A549 (cell line): ENCODE measurements at regions of chr3 and their contacts with region 1.

Region 1: DNA sequence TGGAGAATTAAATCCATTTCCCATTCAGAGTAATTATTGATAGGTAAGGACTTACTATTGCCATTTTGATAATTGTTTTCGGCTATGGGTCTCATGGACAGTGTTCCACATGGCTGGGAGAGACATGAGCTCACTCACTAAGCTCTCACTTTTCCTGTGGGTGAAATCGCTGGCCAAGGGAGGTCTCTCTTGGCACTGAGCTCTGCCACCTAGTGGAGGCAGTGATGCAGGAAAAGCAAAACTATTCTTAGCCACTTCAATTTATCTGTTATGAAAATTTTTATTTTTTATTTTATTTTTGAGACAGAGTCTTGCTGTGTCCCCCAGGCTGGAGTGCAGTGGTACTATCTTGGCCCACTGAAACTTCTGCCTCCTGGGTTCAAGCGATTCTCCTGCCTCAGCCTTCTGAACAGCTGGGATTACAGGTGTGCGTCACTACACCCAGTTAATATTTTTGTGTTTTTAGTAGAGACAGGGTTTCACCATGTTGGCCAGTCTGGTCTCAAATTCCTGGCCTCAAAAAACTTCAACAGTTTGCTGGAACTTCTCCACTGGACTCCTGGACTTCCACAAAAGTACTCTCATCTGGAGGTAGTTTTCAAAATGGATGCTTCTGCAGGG is 4.7 kb upstream of the RNF13 start:
- DNase-seq: peak; percentile 60 to 79
- ATAC-seq: peak; percentile 15 to 31; a peak in 2 of 6 replicates
- H3K4me3 ChIP-seq: no peak overlapping the region
- H3K27ac ChIP-seq: peak overlapping the region in 1 of 2 experiments; percentile 54; a peak in 1 of 6 replicates
- H3K4me1 ChIP-seq: peaks cover 25% of the 10 kb centered on the region
- CTCF ChIP-seq: peak; percentile 93
- EP300 ChIP-seq: no peak
- POLR2A ChIP-seq: no peak
- RAD21 ChIP-seq: peak; percentile 77 to 79

Region 2: GRCh38 chr3:149494022-149494758 is 314.1 kb before region 1 on chr3:
- CTCF ChIA-PET with region 1: interaction called, 18 read pairs
- POLR2A ChIA-PET with region 1: no interaction called
- DNase-seq: peak; percentile 72 to 76
- ATAC-seq: peak; percentile 82 to 90; a peak in 5 of 6 replicates
- H3K4me3 ChIP-seq: no peak overlapping the region
- H3K27ac ChIP-seq: peak overlapping the region in 1 of 2 experiments; percentile 44; a peak in 1 of 6 replicates
- H3K4me1 ChIP-seq: peaks cover 6% of the 10 kb centered on the region; the same call in 2 of the 3 replicates
- CTCF ChIP-seq: peak; percentile 89
- EP300 ChIP-seq: no peak
- POLR2A ChIP-seq: no peak
- RAD21 ChIP-seq: peak; percentile 87 to 95

Region 3: GRCh38 chr3:149667576-149667975 is 140.7 kb before region 1 on chr3:
- CTCF ChIA-PET with region 1: no interaction called
- POLR2A ChIA-PET with region 1: no interaction called
- DNase-seq: no peak
- ATAC-seq: no peak
- H3K4me3 ChIP-seq: no peak overlapping the region
- H3K27ac ChIP-seq: no peak overlapping the region
- H3K4me1 ChIP-seq: peaks cover 12% of the 10 kb centered on the region
- CTCF ChIP-seq: no peak
- EP300 ChIP-seq: no peak
- POLR2A ChIP-seq: no peak
- RAD21 ChIP-seq: no peak

Region 4: DNA sequence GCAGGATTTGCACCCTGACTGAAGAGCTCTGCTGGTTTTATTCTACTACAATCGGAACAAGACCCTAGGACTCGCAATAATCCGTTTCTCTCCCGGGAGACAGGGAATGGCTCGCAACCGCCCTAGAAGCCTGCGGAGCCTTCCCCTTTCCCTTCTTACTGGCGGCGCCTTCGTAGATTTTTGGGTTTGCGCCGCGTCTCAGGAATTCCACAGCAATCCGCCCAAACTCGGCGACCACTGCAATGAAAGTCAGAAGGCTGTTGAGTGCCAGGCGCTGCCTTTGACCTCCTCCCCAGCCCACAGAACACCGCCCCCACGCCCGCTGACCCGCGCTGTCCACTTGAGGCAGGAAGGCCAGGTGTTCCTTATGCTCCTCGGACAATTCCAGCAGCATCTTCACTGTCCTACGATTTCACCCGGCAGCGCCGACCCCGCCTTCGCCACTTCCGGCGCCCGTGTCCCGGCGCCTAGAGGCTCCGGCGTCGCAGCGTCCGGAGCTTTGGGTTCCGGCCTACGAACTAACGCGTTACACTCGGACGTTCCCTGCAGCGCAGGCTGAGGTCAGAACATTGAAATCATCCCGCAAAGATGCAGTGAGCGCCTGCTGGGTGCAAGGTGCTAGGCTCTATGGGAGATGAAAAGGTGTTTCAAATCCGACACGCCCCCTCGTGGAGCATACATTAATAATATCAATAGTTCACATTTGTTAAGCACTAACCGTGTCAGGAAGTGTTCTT is 56.1 kb before region 1 on chr3 and contains the start of gene COMMD2:
- CTCF ChIA-PET with region 1: interaction called, 10 read pairs
- POLR2A ChIA-PET with region 1: interaction called, 5 read pairs
- DNase-seq: peak; percentile 82 to 94
- ATAC-seq: peak; percentile 100
- H3K4me3 ChIP-seq: peak within 1 kb of the TSS; percentile 76
- H3K27ac ChIP-seq: peak within 1 kb of the TSS; percentile 87 to 96
- H3K4me1 ChIP-seq: peaks cover 18% of the 10 kb centered on the region; the same call in 2 of the 3 replicates
- CTCF ChIP-seq: peak; percentile 44; the same call in 2 of the 3 replicates
- EP300 ChIP-seq: no peak
- POLR2A ChIP-seq: peak; percentile 86
- RAD21 ChIP-seq: peak; percentile 53 to 65; a peak in 4 of 5 replicates
- polyA plus RNA-seq, gene COMMD2: 71.5 and 76.1 TPM in 2 replicates

Region 5: GRCh38 chr3:149790268-149790667 is 18.1 kb before region 1 on chr3:
- CTCF ChIA-PET with region 1: interaction called, 18 read pairs
- POLR2A ChIA-PET with region 1: no interaction called
- DNase-seq: peak in 1 of 2 experiments; percentile 29
- ATAC-seq: no peak; a peak in 1 of 6 replicates
- H3K4me3 ChIP-seq: no peak overlapping the region
- H3K27ac ChIP-seq: no peak overlapping the region; a peak in 1 of 6 replicates
- H3K4me1 ChIP-seq: peaks cover 9% of the 10 kb centered on the region; the same call in 2 of the 3 replicates
- CTCF ChIP-seq: no peak
- EP300 ChIP-seq: no peak
- POLR2A ChIP-seq: no peak
- RAD21 ChIP-seq: no peak

Region 6: DNA sequence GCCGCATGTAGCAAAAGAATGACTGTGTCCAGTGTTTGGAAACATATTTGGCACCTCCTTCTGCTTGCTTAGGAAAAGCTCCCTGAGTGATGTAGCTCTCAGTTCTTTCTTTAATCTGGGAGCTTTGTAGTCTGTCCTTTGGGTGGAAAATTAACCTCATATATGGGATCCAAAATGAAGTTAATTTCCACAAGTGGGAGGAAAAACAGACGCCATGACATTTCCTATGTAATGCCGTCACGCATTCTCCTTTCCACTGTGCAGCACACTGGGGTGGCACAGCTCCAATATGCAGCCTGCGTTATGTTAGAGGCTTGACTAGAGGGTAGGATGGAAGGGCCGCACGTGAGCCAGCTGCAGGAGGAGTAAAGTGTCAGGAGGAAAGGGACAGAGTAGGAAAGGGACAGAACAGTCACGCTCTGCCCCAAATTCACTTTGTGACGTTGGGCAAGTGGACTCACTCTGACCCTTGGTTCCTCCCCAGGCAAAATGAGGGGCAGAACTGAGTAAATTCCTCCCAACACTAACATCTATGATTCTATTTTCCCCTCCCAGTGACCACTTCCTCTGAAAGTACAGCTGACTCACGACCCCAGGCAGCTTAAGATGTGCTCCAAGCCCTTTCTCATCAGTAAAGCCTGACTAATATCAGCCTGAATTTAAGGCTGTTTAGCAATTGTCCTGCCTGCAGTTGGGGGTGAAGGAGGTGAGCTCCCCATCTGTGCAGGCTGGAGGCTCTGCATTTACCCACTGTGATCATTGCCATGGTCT is 338.9 kb after region 1 on chr3:
- CTCF ChIA-PET with region 1: no interaction called
- POLR2A ChIA-PET with region 1: no interaction called
- DNase-seq: no peak
- ATAC-seq: 0 out of 6 replicates have a peak, but pooled peaks of 1 of the 2 experiments have one; percentile 39
- H3K4me3 ChIP-seq: no peak overlapping the region
- H3K27ac ChIP-seq: no peak overlapping the region
- H3K4me1 ChIP-seq: no peaks in the 10 kb centered on the region
- CTCF ChIP-seq: no peak
- EP300 ChIP-seq: no peak
- POLR2A ChIP-seq: no peak
- RAD21 ChIP-seq: no peak